IMR-90 (cell line): ENCODE measurements at regions of chr3 and their contacts with region 1.

Region 1: GRCh38 chr3:126752303-126752842 is 48.3 kb downstream of the CHCHD6 start:
- DNase-seq: peak; percentile 78
- ATAC-seq: peak; percentile 89
- H3K4me3 ChIP-seq: no peak overlapping the region
- H3K27ac ChIP-seq: peak overlapping the region; percentile 10; the same call in 1 of the 2 replicates
- H3K4me1 ChIP-seq: peaks cover 17% of the 10 kb centered on the region
- H3K27me3 ChIP-seq: no peaks in the 10 kb centered on the region
- CTCF ChIP-seq: peak; percentile 97
- POLR2A ChIP-seq: no peak
- RAD21 ChIP-seq: peak; percentile 98

Region 2: DNA sequence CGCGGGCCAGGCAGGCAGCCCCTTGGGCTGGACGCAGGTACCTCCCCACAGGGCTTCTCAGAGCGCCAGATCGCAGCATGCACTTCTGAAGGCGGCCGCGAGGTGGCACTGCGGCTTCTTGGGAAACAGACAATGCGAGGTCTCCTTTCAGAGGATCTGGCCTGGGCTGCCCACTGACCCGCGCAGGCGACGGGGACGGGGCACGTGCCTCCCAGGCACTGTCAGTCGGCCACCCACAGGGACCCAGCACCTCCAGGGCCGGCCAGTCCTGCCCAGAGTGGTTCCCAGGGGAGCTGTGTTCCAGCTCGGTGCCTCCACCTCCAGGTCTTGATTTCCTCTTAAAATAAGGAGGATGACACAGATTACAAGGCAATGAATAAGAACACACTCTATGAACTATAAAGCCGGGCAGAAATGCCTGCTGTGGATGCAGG is 73.0 kb before region 1 on chr3:
- CTCF ChIA-PET with region 1: interaction called, 4 read pairs
- POLR2A ChIA-PET with region 1: no interaction called
- dilution Hi-C with region 1: no loop called
- in situ Hi-C with region 1: no loop called
- intact Hi-C with region 1: loop called (anchors 2 kb)
- DNase-seq: peak; percentile 62
- ATAC-seq: peak; percentile 99
- H3K4me3 ChIP-seq: no peak overlapping the region
- H3K27ac ChIP-seq: no peak overlapping the region
- H3K4me1 ChIP-seq: no peaks in the 10 kb centered on the region
- H3K27me3 ChIP-seq: peaks cover 38% of the 10 kb centered on the region
- CTCF ChIP-seq: peak; percentile 85
- POLR2A ChIP-seq: no peak
- RAD21 ChIP-seq: peak; percentile 84

Region 3: GRCh38 chr3:126692845-126693244 is 59.5 kb before region 1 on chr3:
- CTCF ChIA-PET with region 1: no interaction called
- POLR2A ChIA-PET with region 1: no interaction called
- dilution Hi-C with region 1: no loop called
- in situ Hi-C with region 1: no loop called
- intact Hi-C with region 1: no loop called
- DNase-seq: no peak
- ATAC-seq: no peak
- H3K4me3 ChIP-seq: no peak overlapping the region
- H3K27ac ChIP-seq: no peak overlapping the region
- H3K4me1 ChIP-seq: peaks cover 3% of the 10 kb centered on the region; the same call in 1 of the 2 replicates
- H3K27me3 ChIP-seq: peaks cover 21% of the 10 kb centered on the region
- CTCF ChIP-seq: no peak
- POLR2A ChIP-seq: no peak
- RAD21 ChIP-seq: no peak

Region 4: GRCh38 chr3:126850370-126851085 is 98.2 kb after region 1 on chr3:
- CTCF ChIA-PET with region 1: no interaction called
- POLR2A ChIA-PET with region 1: interaction called, 4 read pairs
- dilution Hi-C with region 1: no loop called
- in situ Hi-C with region 1: no loop called
- intact Hi-C with region 1: loop called (anchors 1 kb)
- DNase-seq: peak; percentile 78
- ATAC-seq: peak; percentile 97
- H3K4me3 ChIP-seq: no peak overlapping the region
- H3K27ac ChIP-seq: peak overlapping the region; percentile 79
- H3K4me1 ChIP-seq: peaks cover 15% of the 10 kb centered on the region
- H3K27me3 ChIP-seq: no peaks in the 10 kb centered on the region
- CTCF ChIP-seq: no peak
- POLR2A ChIP-seq: no peak
- RAD21 ChIP-seq: no peak

Region 5: DNA sequence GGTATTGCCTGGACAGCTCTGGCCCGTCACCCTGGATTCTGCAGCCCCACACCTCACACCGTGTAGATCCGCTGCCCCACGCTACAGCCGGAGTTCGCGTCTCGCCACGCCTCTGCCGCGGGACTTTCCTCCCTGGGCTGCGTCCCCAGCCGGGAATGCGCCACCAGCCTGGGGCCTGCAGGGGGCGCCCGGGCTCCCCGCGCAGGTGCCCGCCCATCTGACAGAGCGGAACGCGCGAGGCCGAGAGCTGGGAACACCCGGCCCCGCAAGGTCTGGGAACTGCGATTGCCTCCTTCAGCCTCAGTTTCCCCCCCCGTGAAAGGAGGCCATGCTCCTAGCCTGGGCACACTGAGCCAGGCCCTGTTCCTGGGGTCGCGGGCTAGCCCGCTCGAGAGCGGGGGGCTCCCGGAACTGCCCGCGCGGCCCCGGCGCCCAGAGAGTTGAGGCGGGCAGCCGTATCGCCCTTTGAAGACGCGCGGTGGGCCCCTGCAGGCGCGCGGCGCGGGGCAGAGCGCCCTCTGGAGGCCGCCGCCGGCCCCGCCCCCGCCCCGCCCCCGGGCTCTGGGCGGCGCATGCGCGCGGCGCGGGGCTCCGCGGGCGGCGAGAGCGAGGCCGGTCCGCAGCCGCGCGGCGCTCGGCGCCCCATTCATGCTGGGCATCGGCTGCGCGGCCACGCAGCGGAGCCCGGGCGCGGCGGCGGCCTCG is 230.2 kb after region 1 on chr3 and contains the start of gene PLXNA1:
- CTCF ChIA-PET with region 1: interaction called, 14 read pairs
- POLR2A ChIA-PET with region 1: no interaction called
- dilution Hi-C with region 1: no loop called
- in situ Hi-C with region 1: loop called (anchors 5 kb)
- intact Hi-C with region 1: loop called (anchors 1 kb)
- DNase-seq: peak; percentile 66
- ATAC-seq: peak; percentile 79
- H3K4me3 ChIP-seq: peak within 1 kb of the TSS; percentile 67
- H3K27ac ChIP-seq: peak within 1 kb of the TSS; percentile 72
- H3K4me1 ChIP-seq: peaks cover 14% of the 10 kb centered on the region; the same call in 1 of the 2 replicates
- H3K27me3 ChIP-seq: no peaks in the 10 kb centered on the region; the same call in 1 of the 2 replicates
- CTCF ChIP-seq: peak; percentile 91
- POLR2A ChIP-seq: peak; percentile 55; the same call in 1 of the 2 replicates
- RAD21 ChIP-seq: peak; percentile 48
- total RNA-seq, gene PLXNA1: 13.6 and 14.4 TPM in 2 replicates

Region 6: DNA sequence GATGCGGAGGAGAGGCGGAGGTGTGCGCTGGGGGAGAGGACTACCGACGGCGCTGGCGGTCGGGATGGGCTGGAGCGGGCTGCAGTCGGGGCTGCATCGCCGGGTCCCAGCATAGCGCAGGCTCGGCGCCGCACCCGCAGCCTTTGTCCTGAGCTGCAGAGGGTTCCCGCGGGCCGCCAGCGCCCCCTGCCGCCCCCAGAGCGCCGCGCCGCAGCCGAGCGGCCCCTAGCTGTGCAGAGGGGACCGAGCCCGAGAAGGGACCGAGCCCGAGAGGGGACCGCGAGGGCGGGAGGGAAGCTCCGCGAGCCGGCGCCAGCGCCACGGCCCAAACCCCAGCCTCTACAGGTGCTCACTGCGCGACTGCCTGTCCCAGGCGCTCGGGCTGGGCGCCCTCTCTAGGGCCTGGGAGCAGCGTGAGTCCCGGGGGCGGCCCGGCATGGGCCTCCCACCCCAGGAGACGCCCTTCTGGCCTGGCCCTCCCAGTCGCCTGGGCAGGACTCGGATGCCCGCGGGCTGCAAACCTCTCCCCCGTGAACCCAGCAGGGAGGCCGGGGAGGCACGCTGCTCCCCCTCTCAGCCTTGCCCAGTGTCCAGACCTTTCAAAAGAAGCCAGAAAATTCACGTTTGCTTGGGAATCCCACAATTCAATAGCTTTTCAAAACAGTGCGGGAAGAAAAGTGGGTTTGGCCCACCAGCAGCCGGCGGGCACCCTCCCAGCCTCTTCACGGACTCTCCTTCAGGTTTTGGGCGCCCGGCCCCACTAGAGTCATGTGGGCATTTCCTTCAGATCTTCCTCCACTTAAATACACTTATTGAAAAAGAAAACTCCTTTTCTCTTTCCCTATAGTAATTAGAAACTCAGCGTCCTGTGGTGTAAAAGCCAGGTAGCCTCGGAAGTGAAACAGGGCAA is 703.4 kb after region 1 on chr3:
- CTCF ChIA-PET with region 1: interaction called, 3 read pairs
- POLR2A ChIA-PET with region 1: no interaction called
- dilution Hi-C with region 1: no loop called
- in situ Hi-C with region 1: loop called (anchors 10 kb)
- intact Hi-C with region 1: loop called (anchors 1 kb)
- DNase-seq: peak; percentile 29
- ATAC-seq: peak; percentile 98
- H3K4me3 ChIP-seq: no peak overlapping the region
- H3K27ac ChIP-seq: no peak overlapping the region
- H3K4me1 ChIP-seq: no peaks in the 10 kb centered on the region
- H3K27me3 ChIP-seq: peaks cover 30% of the 10 kb centered on the region
- CTCF ChIP-seq: peak; percentile 97
- POLR2A ChIP-seq: no peak
- RAD21 ChIP-seq: peak; percentile 87